ENCODE measurements at regions of chr11 and their contacts with region 1.

Region 1: DNA sequence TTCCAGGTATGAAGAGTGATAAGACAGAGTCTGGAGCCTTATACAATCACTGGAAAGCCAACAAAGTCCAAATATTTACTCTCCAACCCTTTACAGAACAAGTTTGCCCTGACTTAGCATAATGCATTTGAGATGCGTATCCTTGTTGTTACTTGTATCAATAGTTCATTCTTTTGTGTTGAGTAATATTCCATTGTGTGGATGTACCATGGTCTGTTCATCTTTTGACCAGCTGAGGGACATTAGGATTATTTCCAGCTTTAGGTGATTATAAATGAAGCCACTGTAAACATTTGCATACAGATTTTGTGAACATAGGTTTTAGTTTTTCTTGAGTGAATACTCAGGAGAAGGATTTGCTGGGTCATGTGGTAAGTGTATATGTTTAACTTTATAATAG is 9.7 kb downstream of the SDHAF2 start:
- DNase-seq: no peak
- ATAC-seq: no peak
- H3K4me3 ChIP-seq: no peak overlapping the region
- H3K4me3 Mint-ChIP-seq: no peak overlapping the region
- H3K27ac ChIP-seq: no peak overlapping the region
- H3K27ac Mint-ChIP-seq: no peak overlapping the region
- H3K4me1 ChIP-seq: peaks cover 14% of the 10 kb centered on the region
- H3K4me1 Mint-ChIP-seq: peaks cover 30% of the 10 kb centered on the region
- H3K27me3 ChIP-seq: no peaks in the 10 kb centered on the region
- H3K27me3 Mint-ChIP-seq: no peaks in the 10 kb centered on the region
- CTCF ChIP-seq: no peak

Region 2: GRCh38 chr11:60841797-60842667 is 597.6 kb before region 1 on chr11 and contains the start of gene CCDC86:
- CTCF ChIA-PET with region 1: no interaction called
- POLR2A ChIA-PET with region 1: no interaction called
- intact Hi-C with region 1: loop called in 1 of 2 experiments (anchors 5 kb)
- DNase-seq: peak; percentile 97 to 100 (median 98)
- ATAC-seq: peak; percentile 97
- H3K4me3 ChIP-seq: peak within 1 kb of the TSS; percentile 84 to 93
- H3K4me3 Mint-ChIP-seq: peak within 1 kb of the TSS; percentile 93
- H3K27ac ChIP-seq: peak within 1 kb of the TSS; percentile 71 to 83
- H3K27ac Mint-ChIP-seq: peak within 1 kb of the TSS; percentile 97
- H3K4me1 ChIP-seq: peaks cover 35% of the 10 kb centered on the region
- H3K4me1 Mint-ChIP-seq: peaks cover 46% of the 10 kb centered on the region
- H3K27me3 ChIP-seq: no peaks in the 10 kb centered on the region
- H3K27me3 Mint-ChIP-seq: no peaks in the 10 kb centered on the region
- CTCF ChIP-seq: no peak
- total RNA-seq, gene CCDC86: 10.8 to 11.9 TPM